ENCODE measurements at regions of chr3 and their contacts with region 1.

Region 1: DNA sequence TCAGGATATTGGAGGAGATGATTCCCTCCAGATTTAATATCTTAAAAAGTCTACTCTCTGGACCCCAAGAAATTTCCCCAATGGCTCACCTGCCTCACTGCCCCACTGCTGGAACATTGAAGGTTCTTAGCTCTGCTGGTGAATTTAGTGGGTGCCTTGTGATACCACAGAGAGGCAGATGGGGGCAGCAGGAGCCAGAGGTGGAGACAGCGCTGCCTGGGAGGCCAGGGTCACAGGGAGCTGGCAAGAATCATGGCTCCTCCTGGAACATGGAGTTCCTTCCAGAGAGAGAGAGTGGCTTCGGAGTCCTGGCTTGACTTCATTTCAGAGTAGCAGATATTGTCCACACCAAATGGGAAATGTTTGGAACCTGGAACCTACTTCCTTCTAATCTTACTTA is 263.5 kb upstream of the CFAP20DC start:
- DNase-seq: peak; percentile 68
- ATAC-seq: peak; percentile 95
- H3K4me3 Mint-ChIP-seq: no peak overlapping the region
- H3K27ac Mint-ChIP-seq: no peak overlapping the region
- H3K4me1 Mint-ChIP-seq: no peaks in the 10 kb centered on the region
- H3K27me3 Mint-ChIP-seq: no peaks in the 10 kb centered on the region
- CTCF ChIP-seq: 0 out of 2 replicates have a peak, but pooled peaks have one; percentile 24

Region 2: GRCh38 chr3:59326246-59327024 is 13.1 kb after region 1 on chr3:
- CTCF ChIA-PET with region 1: interaction called, 13 read pairs
- POLR2A ChIA-PET with region 1: no interaction called
- DNase-seq: peak; percentile 51
- ATAC-seq: peak; percentile 69
- H3K4me3 Mint-ChIP-seq: no peak overlapping the region
- H3K27ac Mint-ChIP-seq: no peak overlapping the region
- H3K4me1 Mint-ChIP-seq: peaks cover 9% of the 10 kb centered on the region
- H3K27me3 Mint-ChIP-seq: no peaks in the 10 kb centered on the region
- CTCF ChIP-seq: peak; percentile 64; the same call in 1 of the 2 replicates